Vagina (tissue), 2 donors: ENCODE measurements at regions of chrX and their contacts with region 1.

Region 1: DNA sequence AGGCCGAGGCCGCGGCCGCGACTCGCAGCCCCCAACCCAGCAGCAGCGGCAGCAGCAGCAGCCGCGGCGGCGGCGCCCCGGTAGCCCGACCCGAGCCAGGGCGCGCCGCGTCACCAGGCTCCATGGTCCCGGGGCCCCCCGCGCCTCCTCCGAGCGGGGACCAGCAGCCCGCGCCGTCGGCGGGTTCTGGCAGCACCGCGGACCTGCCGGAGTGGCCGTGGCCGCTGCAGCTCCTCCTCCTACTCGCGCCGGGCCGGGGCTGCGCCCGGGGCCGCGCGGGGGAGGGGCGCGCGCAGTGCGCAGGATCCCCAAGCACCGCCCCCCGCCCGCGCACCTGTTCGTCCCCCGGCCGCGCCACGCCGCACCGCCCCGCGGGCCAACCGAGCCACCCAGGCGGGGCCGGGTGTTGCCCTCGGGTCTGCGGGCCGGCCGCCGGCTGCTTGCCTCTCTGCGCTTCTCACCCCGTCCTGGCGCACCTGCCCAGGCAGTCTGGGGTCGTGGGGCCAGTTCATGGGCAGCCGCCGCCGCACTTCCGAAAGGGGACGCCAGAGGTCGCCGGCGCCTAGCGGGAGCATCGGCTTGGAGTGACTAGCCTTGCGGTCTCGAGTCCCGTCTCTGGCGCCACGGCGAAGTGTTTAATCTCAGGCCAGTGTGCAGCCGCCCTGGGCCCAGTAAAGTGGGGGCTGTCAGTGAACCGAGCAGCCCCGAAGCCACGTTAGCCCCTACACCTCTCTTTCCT is at the start of gene SLC9A7:
- DNase-seq: no peak
- H3K4me3 ChIP-seq: peak within 1 kb of the TSS; percentile 39 to 42
- H3K27ac ChIP-seq: no peak within 1 kb of the TSS
- H3K4me1 ChIP-seq: no peaks in the 10 kb centered on the region
- H3K27me3 ChIP-seq: no peaks in the 10 kb centered on the region
- CTCF ChIP-seq: peak; percentile 31 to 71 (median 58)
- POLR2A ChIP-seq: no peak
- total RNA-seq, gene SLC9A7: 4.2 TPM

Region 2: DNA sequence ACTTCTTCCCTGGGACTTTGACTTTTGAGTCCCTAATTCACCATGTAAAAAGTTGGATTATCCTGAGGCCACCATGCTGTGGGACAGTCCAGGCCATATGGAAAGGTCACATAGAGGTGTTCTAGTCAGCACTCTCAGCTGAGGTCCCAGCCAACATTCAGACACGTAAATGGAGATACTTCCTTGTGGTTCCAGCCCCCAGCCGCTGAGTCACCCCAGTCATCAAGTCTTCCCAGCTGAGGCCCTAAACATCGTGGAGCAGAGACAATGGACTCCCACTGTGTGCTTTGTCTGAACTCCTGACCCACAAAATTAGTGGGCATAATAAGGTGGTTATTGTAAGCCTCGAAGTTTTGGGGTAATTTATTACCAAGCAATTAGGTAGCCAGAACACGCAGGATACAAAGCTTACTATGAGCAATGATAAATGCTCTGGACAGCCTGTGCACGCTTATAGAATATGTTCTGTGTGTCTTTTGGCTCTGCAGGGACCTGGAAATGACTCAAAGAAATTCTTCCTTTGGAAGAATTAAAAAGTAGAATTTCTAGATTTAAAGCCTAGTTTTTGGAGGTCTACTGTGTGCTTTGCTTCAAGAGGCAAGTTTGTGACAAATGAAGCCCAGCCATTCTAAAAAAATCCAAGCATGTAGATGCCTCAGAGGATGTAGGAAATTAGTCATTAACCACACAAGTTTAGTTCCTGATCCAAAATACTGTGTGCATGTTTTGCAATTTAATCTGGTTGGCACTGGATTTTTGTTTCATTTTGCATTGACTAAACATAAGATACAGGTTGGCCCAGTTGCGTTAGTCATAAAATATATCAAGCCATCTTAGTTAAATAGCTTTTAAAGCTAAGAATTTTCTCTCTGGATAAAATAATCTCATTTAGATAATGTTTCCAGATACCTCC is 33.1 kb after region 1 on chrX:
- intact Hi-C with region 1: loop called (anchors 5 kb)
- DNase-seq: no peak
- H3K4me3 ChIP-seq: no peak overlapping the region
- H3K27ac ChIP-seq: no peak overlapping the region
- H3K4me1 ChIP-seq: no peaks in the 10 kb centered on the region
- H3K27me3 ChIP-seq: no peaks in the 10 kb centered on the region
- CTCF ChIP-seq: no peak
- POLR2A ChIP-seq: no peak